Naive thymus-derived CD4-positive, alpha-beta T cell (primary cell): ENCODE measurements at regions of chr7 and their contacts with region 1.

Region 1: DNA sequence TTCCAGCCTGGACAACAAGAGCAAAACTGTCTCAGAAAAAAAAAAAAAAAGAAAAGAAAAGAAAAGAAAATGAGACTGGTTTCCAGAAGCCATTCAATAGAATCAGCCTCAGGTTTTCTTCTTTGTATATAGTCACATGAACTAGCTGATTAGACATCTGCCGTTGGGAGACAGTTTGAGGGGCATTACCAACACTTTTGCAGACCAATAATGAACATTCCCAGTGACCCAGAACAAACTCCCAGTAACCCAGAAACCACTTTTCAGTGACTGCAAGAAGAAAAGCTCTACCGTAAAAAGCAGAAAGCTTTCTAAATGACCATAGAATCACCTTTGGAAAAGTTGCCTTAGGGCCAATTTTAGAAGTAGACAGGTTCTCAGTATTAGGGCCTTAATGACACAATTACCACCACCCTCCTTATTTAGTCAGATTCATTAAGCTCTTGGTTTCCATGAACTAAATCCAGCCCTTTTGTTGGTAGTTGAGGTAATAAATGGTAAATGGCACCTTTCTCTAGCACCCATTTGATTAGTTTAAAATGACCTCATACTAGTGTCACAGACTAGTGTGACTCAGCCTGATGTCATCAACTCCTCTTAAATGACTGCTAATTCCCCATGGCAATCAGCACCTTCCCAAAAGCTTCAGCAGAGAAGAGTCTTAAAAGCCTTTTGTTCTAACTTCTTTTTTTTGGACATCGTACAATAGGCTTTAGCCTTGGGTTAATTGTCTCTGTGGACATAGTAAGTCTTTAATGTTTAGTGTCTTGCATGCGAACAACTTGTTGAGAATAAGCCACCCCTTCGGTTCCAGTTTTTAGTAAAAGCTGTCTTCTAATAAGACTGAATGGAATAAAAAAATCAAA is 33.6 kb upstream of the XRCC2 start:
- DNase-seq: no peak
- ATAC-seq: no peak
- H3K4me3 ChIP-seq: no peak overlapping the region
- H3K4me3 Mint-ChIP-seq: no peak overlapping the region
- H3K27ac ChIP-seq: no peak overlapping the region
- H3K27ac Mint-ChIP-seq: no peak overlapping the region
- H3K4me1 ChIP-seq: no peaks in the 10 kb centered on the region
- H3K4me1 Mint-ChIP-seq: peaks cover 0 to 9% (median 3%) of the 10 kb centered on the region in 7 donors
- H3K27me3 ChIP-seq: no peaks in the 10 kb centered on the region
- H3K27me3 Mint-ChIP-seq: peaks cover 0 to 3% (median 0%) of the 10 kb centered on the region in 5 donors

Region 2: DNA sequence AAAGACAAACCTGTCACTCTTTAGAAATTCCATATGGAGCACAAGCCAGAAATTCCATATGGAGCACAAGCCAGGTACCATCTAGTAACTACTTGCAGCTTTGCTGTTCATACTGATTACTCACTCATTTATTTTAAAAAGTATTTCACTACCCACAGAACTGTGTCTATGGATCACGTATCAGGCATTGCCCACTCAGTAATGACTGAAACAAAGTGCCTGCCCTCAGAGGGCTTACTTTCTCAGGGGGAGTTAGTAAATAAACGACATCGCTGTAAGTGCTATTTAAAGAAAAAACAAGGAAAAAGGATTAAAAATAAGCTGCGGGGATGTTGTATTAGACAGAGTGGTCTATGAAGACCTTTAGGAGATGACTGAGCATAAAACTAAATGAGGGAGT is 513.1 kb before region 1 on chr7:
- CTCF ChIA-PET with region 1: no interaction called
- POLR2A ChIA-PET with region 1: no interaction called
- intact Hi-C with region 1: loop called in 1 of 2 experiments (anchors 5 kb)
- DNase-seq: no peak
- ATAC-seq: no peak
- H3K4me3 ChIP-seq: no peak overlapping the region
- H3K4me3 Mint-ChIP-seq: no peak overlapping the region
- H3K27ac ChIP-seq: no peak overlapping the region
- H3K27ac Mint-ChIP-seq: peak overlapping the region in 7 of 9 donors; percentile 4 to 75 (median 54)
- H3K4me1 ChIP-seq: no peaks in the 10 kb centered on the region
- H3K4me1 Mint-ChIP-seq: peaks cover 0 to 9% (median 0%) of the 10 kb centered on the region in 7 donors
- H3K27me3 ChIP-seq: no peaks in the 10 kb centered on the region
- H3K27me3 Mint-ChIP-seq: no peaks in the 10 kb centered on the region